ENCODE measurements at regions of chr6 and their contacts with region 1.

Region 1: GRCh38 chr6:149834513-149835481 is 29.4 kb downstream of the LRP11 start:
- DNase-seq: peak; percentile 49
- H3K4me3 ChIP-seq: no peak overlapping the region
- H3K27ac ChIP-seq: no peak overlapping the region
- H3K4me1 ChIP-seq: no peaks in the 10 kb centered on the region
- H3K27me3 ChIP-seq: no peaks in the 10 kb centered on the region
- CTCF ChIP-seq: peak; percentile 85 to 91 (median 88)
- POLR2A ChIP-seq: no peak

Region 2: GRCh38 chr6:149235130-149235561 is 599.7 kb before region 1 on chr6:
- intact Hi-C with region 1: no loop called
- DNase-seq: no peak
- H3K4me3 ChIP-seq: no peak overlapping the region
- H3K27ac ChIP-seq: no peak overlapping the region
- H3K4me1 ChIP-seq: peaks cover 2% of the 10 kb centered on the region
- H3K27me3 ChIP-seq: no peaks in the 10 kb centered on the region
- CTCF ChIP-seq: no peak
- POLR2A ChIP-seq: no peak

Region 3: GRCh38 chr6:149863697-149864577 is 29.1 kb after region 1 on chr6 and contains the start of gene LRP11:
- intact Hi-C with region 1: loop called (anchors 2 kb)
- DNase-seq: peak; percentile 93
- H3K4me3 ChIP-seq: peak within 1 kb of the TSS; percentile 68 to 75
- H3K27ac ChIP-seq: peak within 1 kb of the TSS; percentile 86 to 95
- H3K4me1 ChIP-seq: peaks cover 4% of the 10 kb centered on the region
- H3K27me3 ChIP-seq: no peaks in the 10 kb centered on the region
- CTCF ChIP-seq: peak in 2 of 4 experiments; percentile 6 to 9
- POLR2A ChIP-seq: peak; percentile 90
- total RNA-seq, gene LRP11: 52.7 to 76.3 TPM

Region 4: DNA sequence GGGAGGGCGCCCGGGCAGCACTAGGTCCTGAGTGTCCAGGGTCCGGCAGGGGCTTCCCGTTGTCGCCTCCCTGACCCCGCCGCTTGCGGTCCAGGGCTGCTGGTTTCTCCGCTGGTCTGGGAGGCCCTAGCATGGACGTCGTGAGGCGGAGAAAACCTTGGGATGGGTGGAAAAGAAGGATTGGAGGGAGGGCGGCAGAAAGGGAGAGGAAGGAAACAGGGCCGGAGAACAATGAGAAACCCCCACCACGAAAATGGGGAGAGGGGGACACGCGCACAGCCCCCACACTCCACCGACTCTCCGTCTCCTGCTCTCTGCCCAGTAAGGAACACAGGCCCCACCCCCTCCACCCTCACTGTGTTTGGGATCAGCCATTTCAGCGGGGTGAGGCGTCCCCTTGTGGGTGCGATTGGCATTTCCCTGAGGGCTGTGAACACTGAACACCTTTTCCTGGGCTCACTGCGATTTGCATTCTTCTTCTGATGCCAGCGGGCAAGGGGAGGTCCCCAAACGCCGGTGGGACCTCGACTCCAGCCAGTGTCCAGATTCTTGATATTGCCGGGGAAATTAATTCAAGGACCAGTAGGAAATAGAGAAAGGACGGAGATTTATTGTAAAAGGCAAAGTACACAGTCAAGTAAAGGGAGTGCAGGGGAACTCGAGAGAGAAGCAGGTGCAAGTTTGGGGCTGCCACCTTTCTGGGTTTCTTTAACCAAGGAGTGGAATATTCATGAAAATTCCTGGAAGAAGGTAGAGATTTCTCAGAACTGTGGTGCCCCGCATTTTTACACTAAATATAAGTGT is 91.4 kb after region 1 on chr6:
- intact Hi-C with region 1: loop called (anchors 1 kb)
- DNase-seq: peak; percentile 90
- H3K4me3 ChIP-seq: peak overlapping the region; percentile 39 to 41
- H3K27ac ChIP-seq: peak overlapping the region; percentile 35 to 52
- H3K4me1 ChIP-seq: no peaks in the 10 kb centered on the region
- H3K27me3 ChIP-seq: no peaks in the 10 kb centered on the region
- CTCF ChIP-seq: peak; percentile 74 to 96 (median 88)
- POLR2A ChIP-seq: no peak

Measured in prostate gland (tissue), 2 donors.